Ascending aorta (tissue), 2 donors: ENCODE measurements at regions of chrX and their contacts with region 1.

Region 1: GRCh38 chrX:129701624-129702069 is 37.1 kb upstream of the XPNPEP2 start:
- DNase-seq: peak; percentile 36 to 86
- H3K4me3 ChIP-seq: no peak overlapping the region
- H3K27ac ChIP-seq: peak overlapping the region; percentile 63 to 75
- H3K4me1 ChIP-seq: peaks cover 0 to 5% of the 10 kb centered on the region in 2 donors
- H3K27me3 ChIP-seq: no peaks in the 10 kb centered on the region
- CTCF ChIP-seq: no peak

Region 2: GRCh38 chrX:129679901-129680300 is 21.7 kb before region 1 on chrX:
- intact Hi-C with region 1: loop called (anchors 2 kb)
- DNase-seq: no peak
- H3K4me3 ChIP-seq: no peak overlapping the region
- H3K27ac ChIP-seq: no peak overlapping the region
- H3K4me1 ChIP-seq: peaks cover 0 to 4% of the 10 kb centered on the region in 2 donors
- H3K27me3 ChIP-seq: no peaks in the 10 kb centered on the region
- CTCF ChIP-seq: no peak